ENCODE measurements at regions of chr18 and their contacts with region 1.

Region 1: DNA sequence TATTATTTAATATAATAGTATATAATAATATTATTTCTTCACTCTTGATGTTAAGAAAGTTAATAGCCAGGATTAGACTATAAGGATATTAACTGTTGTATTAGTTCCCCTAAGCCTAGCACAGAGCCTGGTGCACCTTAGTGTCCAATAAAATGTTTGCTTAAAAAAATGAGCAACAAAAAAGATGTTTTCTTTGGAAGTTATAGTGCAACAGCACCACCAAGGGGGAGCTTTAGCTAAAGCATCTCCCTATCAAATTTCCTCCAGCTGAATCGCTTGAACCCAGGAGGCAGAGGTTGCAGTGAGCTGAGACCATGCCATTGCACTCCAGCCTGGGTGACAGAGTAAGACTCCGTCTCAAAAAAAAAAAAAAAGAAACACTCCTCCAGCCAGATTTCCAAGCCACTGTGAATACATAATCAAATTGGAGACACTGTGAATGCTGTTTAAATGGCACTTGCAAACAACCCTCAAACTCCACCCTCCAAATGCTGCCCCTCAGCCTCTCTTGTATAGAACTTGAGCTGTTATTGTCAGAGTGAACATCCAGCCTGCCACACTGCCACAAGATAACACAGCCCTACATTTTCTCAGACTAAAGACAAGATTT is 221.9 kb downstream of the DYM start:
- DNase-seq: no peak
- ATAC-seq: peak; percentile 44
- H3K4me3 Mint-ChIP-seq: no peak overlapping the region
- H3K27ac Mint-ChIP-seq: no peak overlapping the region
- H3K4me1 Mint-ChIP-seq: no peaks in the 10 kb centered on the region
- H3K27me3 Mint-ChIP-seq: no peaks in the 10 kb centered on the region
- CTCF ChIP-seq: peak; percentile 13; the same call in 1 of the 2 replicates

Region 2: GRCh38 chr18:48675352-48675761 is 563.2 kb before region 1 on chr18:
- CTCF ChIA-PET with region 1: interaction called, 11 read pairs
- POLR2A ChIA-PET with region 1: no interaction called
- DNase-seq: peak; percentile 92
- ATAC-seq: peak; percentile 94
- H3K4me3 Mint-ChIP-seq: no peak overlapping the region
- H3K27ac Mint-ChIP-seq: no peak overlapping the region
- H3K4me1 Mint-ChIP-seq: no peaks in the 10 kb centered on the region
- H3K27me3 Mint-ChIP-seq: no peaks in the 10 kb centered on the region
- CTCF ChIP-seq: peak; percentile 88

Region 3: DNA sequence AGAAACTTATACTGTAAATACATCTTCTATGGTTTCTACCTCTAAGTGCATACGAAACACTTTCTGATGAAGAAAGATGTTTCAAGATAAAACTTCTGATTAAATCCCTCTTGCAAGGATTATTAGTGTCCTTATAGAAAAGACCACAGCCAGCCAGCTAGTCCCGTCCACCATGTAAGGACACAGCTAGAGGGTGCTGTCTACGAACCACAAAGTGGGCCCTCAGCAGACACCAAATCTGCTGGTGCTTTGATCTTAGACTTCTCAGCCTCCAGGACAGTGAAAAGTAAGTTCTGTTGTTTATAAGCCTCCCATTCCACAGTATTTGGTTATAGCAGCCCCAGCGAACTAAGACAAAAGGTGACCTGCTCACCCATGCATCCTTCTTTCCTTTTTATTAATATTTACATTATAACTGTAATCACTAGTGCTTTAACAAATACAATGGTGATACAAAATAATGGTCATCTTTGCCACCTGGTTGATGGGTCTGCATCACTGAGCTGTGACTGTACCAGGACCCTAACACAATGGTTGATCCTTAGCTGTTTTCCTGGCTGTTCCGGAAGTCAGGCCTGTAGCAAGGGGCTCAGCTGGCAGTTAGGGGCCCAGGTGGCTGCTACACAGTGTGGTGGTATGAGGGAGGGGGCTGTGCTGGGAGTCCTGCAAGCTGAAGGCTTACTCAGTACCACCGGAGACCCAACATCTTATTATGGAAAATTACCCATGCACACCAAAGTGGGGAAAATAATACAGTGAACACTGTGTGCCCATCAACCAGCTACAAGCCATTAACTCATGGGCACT is 179.3 kb before region 1 on chr18:
- CTCF ChIA-PET with region 1: interaction called, 10 read pairs
- POLR2A ChIA-PET with region 1: no interaction called
- DNase-seq: no peak
- ATAC-seq: peak; percentile 51; the same call in 1 of the 2 replicates
- H3K4me3 Mint-ChIP-seq: no peak overlapping the region
- H3K27ac Mint-ChIP-seq: no peak overlapping the region
- H3K4me1 Mint-ChIP-seq: peaks cover 28% of the 10 kb centered on the region
- H3K27me3 Mint-ChIP-seq: no peaks in the 10 kb centered on the region
- CTCF ChIP-seq: no peak

Measured in WTC11 (cell line).